Activated B cell treated with CpG ODN at 0.5 μM for 24 hours (primary cell): ENCODE measurements at regions of chr9 and their contacts with region 1.

Region 1: DNA sequence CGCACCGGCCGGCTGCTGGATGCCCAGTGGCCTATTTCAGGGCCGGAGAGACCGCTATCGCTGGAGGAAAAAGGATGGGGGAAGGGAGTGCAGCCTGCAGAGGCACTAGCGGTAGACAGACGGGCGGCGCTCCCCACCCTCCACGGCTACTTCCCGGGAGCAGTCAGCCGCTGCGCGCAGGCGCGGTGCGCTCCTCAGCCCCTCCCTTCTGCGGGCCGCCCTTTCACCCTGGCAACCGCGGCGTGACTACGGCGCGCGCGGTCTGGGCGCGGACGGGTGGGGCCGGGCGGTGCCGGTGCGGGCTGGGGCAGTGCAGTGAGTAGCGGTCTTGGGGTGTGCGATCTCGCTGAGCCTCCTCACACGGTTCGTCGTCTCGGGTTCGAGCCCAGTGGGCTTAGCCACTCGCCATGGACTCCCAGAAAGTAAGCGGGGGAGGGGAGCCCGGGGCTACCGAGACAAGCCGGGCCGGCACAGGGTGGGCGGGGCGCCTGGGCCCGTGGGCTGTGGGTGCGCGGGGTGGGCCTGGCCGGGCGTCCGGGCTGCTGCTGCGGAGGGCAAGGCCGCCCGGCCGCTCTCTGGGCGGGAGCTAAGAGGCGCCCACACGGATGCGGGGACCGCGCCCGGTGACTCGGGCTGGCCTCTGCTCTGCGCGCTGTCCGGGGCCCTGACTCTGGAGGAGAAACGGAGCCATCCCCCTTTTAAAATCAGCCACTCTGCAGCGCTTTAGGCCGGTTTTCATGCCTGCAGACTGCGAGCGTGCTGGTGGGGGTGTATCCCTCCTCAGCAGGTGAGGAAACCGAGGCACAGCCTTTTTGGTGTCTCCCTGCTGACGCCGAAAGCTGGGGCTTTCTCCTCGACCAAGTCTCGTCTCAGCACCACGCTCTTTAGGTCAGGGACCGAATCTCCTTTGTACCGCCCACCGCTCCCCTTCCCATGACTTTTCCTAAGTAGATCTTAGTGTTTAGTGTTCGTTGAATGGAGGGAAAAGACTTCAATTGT is at the start of gene FSD1L:
- DNase-seq: peak; percentile 89
- ATAC-seq: peak; percentile 92
- H3K4me3 Mint-ChIP-seq: peak within 1 kb of the TSS; percentile 90
- H3K27ac Mint-ChIP-seq: peak within 1 kb of the TSS; percentile 75
- H3K4me1 Mint-ChIP-seq: peaks cover 17% of the 10 kb centered on the region
- H3K27me3 Mint-ChIP-seq: no peaks in the 10 kb centered on the region
- CTCF ChIP-seq: no peak
- total RNA-seq, gene FSD1L: 10.2 and 12.4 TPM in 2 replicates

Region 2: GRCh38 chr9:104093647-104094533 is 1354.2 kb before region 1 on chr9 and contains the start of gene SMC2:
- CTCF ChIA-PET with region 1: no interaction called
- POLR2A ChIA-PET with region 1: no interaction called
- intact Hi-C with region 1: loop called (anchors 2 kb)
- DNase-seq: peak; percentile 90
- ATAC-seq: peak; percentile 97
- H3K4me3 Mint-ChIP-seq: peak within 1 kb of the TSS; percentile 99
- H3K27ac Mint-ChIP-seq: peak within 1 kb of the TSS; percentile 99
- H3K4me1 Mint-ChIP-seq: peaks cover 31% of the 10 kb centered on the region
- H3K27me3 Mint-ChIP-seq: no peaks in the 10 kb centered on the region
- CTCF ChIP-seq: no peak
- total RNA-seq, gene SMC2: 12.5 and 13.5 TPM in 2 replicates

Region 3: DNA sequence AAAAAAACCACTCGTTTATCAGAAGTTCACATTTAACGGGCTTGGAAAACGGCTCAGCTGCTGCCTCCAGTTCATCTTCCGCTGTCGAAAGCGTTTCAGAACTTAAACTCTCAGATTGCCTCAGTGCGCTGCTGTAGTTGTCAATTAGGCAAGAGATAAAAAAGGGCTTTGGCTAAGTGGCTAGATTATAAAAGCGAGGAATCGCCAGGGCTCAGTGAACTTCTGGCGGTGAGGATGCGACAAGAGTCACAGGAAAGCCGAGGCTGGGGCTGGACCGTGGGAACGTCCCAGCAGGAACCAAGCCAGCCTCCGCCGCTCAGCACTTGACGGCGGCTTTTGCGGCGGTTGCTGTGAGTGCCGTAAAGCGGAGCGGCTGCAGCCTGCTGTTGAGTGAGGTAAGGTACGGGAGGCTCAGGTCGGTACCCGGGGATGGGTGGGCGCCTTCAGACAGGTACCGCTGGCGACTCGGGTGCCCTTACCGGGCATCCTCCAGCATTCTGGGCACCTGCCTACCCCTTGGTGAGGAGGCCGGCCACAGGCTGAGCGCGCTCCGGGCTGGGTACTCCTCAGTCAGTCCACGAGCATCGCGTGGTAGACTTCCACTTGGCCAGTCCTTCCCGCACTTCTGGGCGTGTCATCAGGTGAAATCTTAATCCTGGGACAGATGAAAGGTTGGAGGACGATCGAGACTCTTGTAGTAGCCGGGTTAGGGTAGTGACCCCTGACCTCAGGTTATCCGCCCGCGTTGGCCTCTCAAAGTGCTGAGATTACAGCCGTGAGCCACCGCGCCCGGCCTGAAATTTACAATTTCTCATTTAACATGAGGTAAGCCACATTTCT is 109.9 kb after region 1 on chr9 and contains the start of gene FKTN:
- CTCF ChIA-PET with region 1: no interaction called
- POLR2A ChIA-PET with region 1: no interaction called
- intact Hi-C with region 1: loop called (anchors 1 kb)
- DNase-seq: peak; percentile 72
- ATAC-seq: peak; percentile 99
- H3K4me3 Mint-ChIP-seq: peak within 1 kb of the TSS; percentile 96
- H3K27ac Mint-ChIP-seq: peak within 1 kb of the TSS; percentile 83
- H3K4me1 Mint-ChIP-seq: peaks cover 20% of the 10 kb centered on the region
- H3K27me3 Mint-ChIP-seq: no peaks in the 10 kb centered on the region
- CTCF ChIP-seq: no peak
- total RNA-seq, gene FKTN: 16.8 and 17.5 TPM in 2 replicates